ENCODE measurements at regions of chr16 and their contacts with region 1.

Region 1: DNA sequence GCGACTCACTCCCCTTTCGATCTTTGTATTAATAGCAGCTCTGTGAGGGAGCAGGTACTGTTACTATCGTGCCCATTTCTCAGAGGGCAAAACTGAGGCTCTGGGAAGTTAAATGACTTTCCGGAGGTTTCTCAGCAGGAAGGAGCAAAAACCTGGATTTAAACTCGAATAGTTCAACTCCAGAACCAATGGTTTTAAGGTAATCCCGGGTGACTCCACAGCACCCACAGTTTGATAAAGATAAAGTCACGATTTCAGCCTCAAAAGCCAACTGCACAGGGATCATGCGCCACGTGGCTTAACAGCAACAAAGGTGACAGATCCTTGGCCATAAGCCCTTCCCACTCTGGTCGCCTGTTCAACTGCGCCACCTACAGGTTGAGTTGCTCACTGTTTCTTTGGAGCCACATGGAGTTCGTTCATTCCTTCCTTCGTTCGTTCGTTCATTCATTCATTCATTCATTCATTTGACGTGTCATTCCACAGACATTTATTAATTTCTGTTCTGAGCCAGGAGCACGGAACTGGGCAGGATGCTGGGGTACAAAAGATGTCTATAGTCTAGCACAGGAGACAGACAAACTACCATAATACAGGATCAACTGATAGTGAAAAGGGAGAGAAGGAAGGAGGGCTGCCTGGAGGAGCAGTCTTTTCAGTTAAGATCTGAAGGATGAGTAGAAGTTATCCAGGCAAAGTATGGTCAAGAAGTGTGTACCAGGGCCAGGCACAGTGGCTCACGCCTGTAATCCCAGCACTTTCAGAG is 134.8 kb downstream of the HS3ST2 start:
- DNase-seq: peak; percentile 79
- H3K4me3 Mint-ChIP-seq: no peak overlapping the region
- H3K27ac Mint-ChIP-seq: no peak overlapping the region
- H3K4me1 Mint-ChIP-seq: peaks cover 7% of the 10 kb centered on the region
- H3K27me3 Mint-ChIP-seq: peaks cover 43% of the 10 kb centered on the region

Region 2: GRCh38 chr16:21554795-21555585 is 1393.8 kb before region 1 on chr16:
- CTCF ChIA-PET with region 1: no interaction called
- POLR2A ChIA-PET with region 1: no interaction called
- intact Hi-C with region 1: loop called (anchors 2 kb)
- DNase-seq: peak; percentile 95
- H3K4me3 Mint-ChIP-seq: peak overlapping the region; percentile 18
- H3K27ac Mint-ChIP-seq: peak overlapping the region; percentile 25
- H3K4me1 Mint-ChIP-seq: peaks cover 8% of the 10 kb centered on the region
- H3K27me3 Mint-ChIP-seq: peaks cover 4% of the 10 kb centered on the region

Region 3: GRCh38 chr16:22787466-22788189 is 161.2 kb before region 1 on chr16:
- CTCF ChIA-PET with region 1: no interaction called
- POLR2A ChIA-PET with region 1: no interaction called
- intact Hi-C with region 1: no loop called
- DNase-seq: no peak
- H3K4me3 Mint-ChIP-seq: no peak overlapping the region
- H3K27ac Mint-ChIP-seq: no peak overlapping the region
- H3K4me1 Mint-ChIP-seq: no peaks in the 10 kb centered on the region
- H3K27me3 Mint-ChIP-seq: peaks cover 13% of the 10 kb centered on the region

Region 4: DNA sequence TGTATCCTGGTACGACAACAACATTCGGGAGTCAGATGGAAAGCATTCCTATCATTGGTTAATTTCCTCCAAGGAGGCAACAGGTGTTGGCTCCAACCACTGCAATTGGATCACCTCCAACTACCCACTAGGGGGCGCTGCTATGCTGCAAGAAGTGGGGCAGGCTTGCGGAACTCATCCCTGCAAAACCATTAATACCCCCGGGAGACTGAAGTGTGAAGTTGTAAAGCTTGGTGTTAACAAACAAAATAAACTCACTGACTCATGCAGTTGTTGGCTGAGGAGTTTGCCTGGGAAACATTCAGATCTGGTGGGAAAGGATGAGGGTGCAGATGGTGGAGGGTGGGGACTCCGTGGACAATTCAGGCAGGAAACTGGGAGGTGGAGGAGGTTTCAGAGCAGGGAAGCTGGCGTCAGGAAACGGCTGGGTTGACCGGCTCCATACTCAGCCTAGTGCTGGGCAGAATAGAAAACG is 49.9 kb before region 1 on chr16:
- CTCF ChIA-PET with region 1: interaction called, 4 read pairs
- POLR2A ChIA-PET with region 1: no interaction called
- intact Hi-C with region 1: loop called (anchors 2 kb)
- DNase-seq: peak; percentile 64
- H3K4me3 Mint-ChIP-seq: no peak overlapping the region
- H3K27ac Mint-ChIP-seq: no peak overlapping the region
- H3K4me1 Mint-ChIP-seq: no peaks in the 10 kb centered on the region
- H3K27me3 Mint-ChIP-seq: peaks cover 15% of the 10 kb centered on the region

Measured in activated CD4-positive, alpha-beta memory T cell treated with anti-CD3 and anti-CD28 coated beads for 36 hours (primary cell).